ENCODE measurements at regions of chr10 and their contacts with region 1.

Region 1: GRCh38 chr10:53601260-53601875 is 828.8 kb upstream of the MBL2 start:
- DNase-seq: no peak
- ATAC-seq: no peak
- H3K4me3 ChIP-seq: no peak overlapping the region
- H3K27ac ChIP-seq: no peak overlapping the region
- H3K4me1 ChIP-seq: no peaks in the 10 kb centered on the region
- H3K27me3 ChIP-seq: no peaks in the 10 kb centered on the region

Region 2: GRCh38 chr10:52533986-52534385 is 1067.4 kb before region 1 on chr10:
- intact Hi-C with region 1: no loop called
- DNase-seq: no peak
- ATAC-seq: no peak
- H3K4me3 ChIP-seq: no peak overlapping the region
- H3K27ac ChIP-seq: no peak overlapping the region
- H3K4me1 ChIP-seq: no peaks in the 10 kb centered on the region
- H3K27me3 ChIP-seq: no peaks in the 10 kb centered on the region

Region 3: DNA sequence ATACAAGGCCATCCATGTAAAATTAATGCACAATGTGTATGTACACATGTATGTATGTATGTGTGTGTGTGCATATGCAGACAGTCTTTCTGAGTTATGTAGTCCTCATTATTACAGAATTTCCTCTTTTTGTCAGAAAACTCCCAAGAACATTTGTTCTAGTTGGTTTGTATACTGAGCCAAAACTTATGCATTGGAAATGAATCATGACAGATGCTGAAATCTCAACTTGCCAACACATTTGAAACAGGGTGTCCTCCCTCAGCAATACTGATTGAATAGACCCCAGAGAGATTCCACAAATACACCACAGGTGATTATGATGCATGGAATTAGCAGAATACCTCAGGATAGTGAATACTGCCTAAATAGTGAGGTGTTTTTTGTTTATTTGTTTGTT is 1672.6 kb after region 1 on chr10:
- intact Hi-C with region 1: loop called in 1 of 4 experiments (anchors 10 kb)
- DNase-seq: no peak
- ATAC-seq: no peak
- H3K4me3 ChIP-seq: no peak overlapping the region
- H3K27ac ChIP-seq: no peak overlapping the region
- H3K4me1 ChIP-seq: no peaks in the 10 kb centered on the region
- H3K27me3 ChIP-seq: no peaks in the 10 kb centered on the region